Activated B cell treated with CpG ODN at 0.5 μM for 24 hours (primary cell): ENCODE measurements at regions of chr11 and their contacts with region 1.

Region 1: GRCh38 chr11:2390725-2391151 is 9.8 kb upstream of the TSSC4 start:
- DNase-seq: no peak
- ATAC-seq: peak; percentile 13
- H3K4me3 Mint-ChIP-seq: peak overlapping the region; percentile 32
- H3K27ac Mint-ChIP-seq: peak overlapping the region; percentile 67
- H3K4me1 Mint-ChIP-seq: peaks cover 88% of the 10 kb centered on the region
- H3K27me3 Mint-ChIP-seq: no peaks in the 10 kb centered on the region
- CTCF ChIP-seq: no peak

Region 2: DNA sequence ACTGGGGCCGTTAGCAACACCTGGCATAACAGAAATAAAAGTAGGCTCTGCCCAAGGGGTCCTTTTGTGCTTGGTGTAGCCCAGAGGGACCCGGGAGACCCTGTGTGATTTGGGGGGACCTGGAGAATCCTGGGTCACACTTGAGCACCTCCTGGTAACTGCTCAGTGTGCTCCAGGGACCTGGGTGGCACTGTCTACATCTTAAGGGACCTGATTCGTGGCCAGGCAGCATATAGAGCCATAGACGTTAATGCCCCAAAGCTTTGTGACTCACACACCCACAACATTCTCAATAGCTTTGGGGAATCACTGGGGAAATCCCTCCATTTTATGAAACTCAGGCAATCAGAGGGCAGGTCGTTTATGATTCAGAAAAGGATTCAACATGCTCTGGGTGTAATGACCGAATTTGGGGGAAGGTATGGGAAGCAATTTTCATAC is 248.0 kb before region 1 on chr11:
- CTCF ChIA-PET with region 1: no interaction called
- POLR2A ChIA-PET with region 1: no interaction called
- intact Hi-C with region 1: loop called (anchors 5 kb)
- DNase-seq: no peak
- ATAC-seq: peak; percentile 83
- H3K4me3 Mint-ChIP-seq: peak overlapping the region; percentile 63
- H3K27ac Mint-ChIP-seq: peak overlapping the region; percentile 53
- H3K4me1 Mint-ChIP-seq: peaks cover 22% of the 10 kb centered on the region
- H3K27me3 Mint-ChIP-seq: peaks cover 47% of the 10 kb centered on the region
- CTCF ChIP-seq: no peak

Region 3: GRCh38 chr11:2377511-2378443 is 13.0 kb before region 1 on chr11:
- CTCF ChIA-PET with region 1: no interaction called
- POLR2A ChIA-PET with region 1: interaction called, 46 read pairs
- intact Hi-C with region 1: loop called (anchors 1 kb)
- DNase-seq: no peak
- ATAC-seq: peak; percentile 43
- H3K4me3 Mint-ChIP-seq: peak overlapping the region; percentile 82
- H3K27ac Mint-ChIP-seq: peak overlapping the region; percentile 86
- H3K4me1 Mint-ChIP-seq: peaks cover 46% of the 10 kb centered on the region
- H3K27me3 Mint-ChIP-seq: no peaks in the 10 kb centered on the region
- CTCF ChIP-seq: no peak